Endothelial cell of umbilical vein (primary cell): ENCODE measurements at regions of chr12 and their contacts with region 1.

Region 1: GRCh38 chr12:15268927-15269552 is 47.8 kb upstream of the RERG start:
- DNase-seq: peak; percentile 61
- H3K4me3 ChIP-seq: no peak overlapping the region
- H3K27ac ChIP-seq: no peak overlapping the region
- H3K4me1 ChIP-seq: no peaks in the 10 kb centered on the region
- H3K27me3 ChIP-seq: no peaks in the 10 kb centered on the region
- CTCF ChIP-seq: peak; percentile 69 to 72
- POLR2A ChIP-seq: no peak

Region 2: GRCh38 chr12:14629832-14630710 is 639.0 kb before region 1 on chr12:
- CTCF ChIA-PET with region 1: no interaction called
- POLR2A ChIA-PET with region 1: no interaction called
- dilution Hi-C with region 1: no loop called
- intact Hi-C with region 1: loop called (anchors 1 kb)
- DNase-seq: peak; percentile 70
- H3K4me3 ChIP-seq: no peak overlapping the region
- H3K27ac ChIP-seq: no peak overlapping the region
- H3K4me1 ChIP-seq: no peaks in the 10 kb centered on the region
- H3K27me3 ChIP-seq: peaks cover 2 to 6% of the 10 kb centered on the region in 2 experiments
- CTCF ChIP-seq: peak; percentile 86 to 91
- POLR2A ChIP-seq: no peak

Region 3: DNA sequence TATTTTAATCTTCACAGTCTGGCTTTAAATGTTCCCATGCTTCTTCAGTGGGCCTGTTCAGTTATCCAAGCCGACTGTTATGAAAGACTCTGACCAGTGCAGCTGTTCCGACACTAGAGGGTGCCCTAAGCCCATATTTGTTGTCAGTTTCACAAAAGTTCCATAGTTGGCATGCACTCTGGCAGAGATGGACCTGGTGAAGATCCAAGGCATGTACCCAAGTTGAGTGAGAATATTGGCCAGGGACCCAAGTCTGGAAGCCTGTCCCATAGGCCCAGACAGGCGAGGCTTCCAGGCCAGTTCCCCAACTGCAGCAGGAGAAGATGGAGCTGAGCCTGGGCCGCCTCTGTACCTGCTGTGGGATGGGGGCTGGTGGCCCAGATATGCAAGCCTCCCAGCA is 545.3 kb before region 1 on chr12:
- CTCF ChIA-PET with region 1: interaction called, 17 read pairs
- POLR2A ChIA-PET with region 1: no interaction called
- dilution Hi-C with region 1: no loop called
- intact Hi-C with region 1: loop called (anchors 1 kb)
- DNase-seq: peak; percentile 56
- H3K4me3 ChIP-seq: no peak overlapping the region
- H3K27ac ChIP-seq: no peak overlapping the region
- H3K4me1 ChIP-seq: no peaks in the 10 kb centered on the region
- H3K27me3 ChIP-seq: peaks cover 0 to 2% of the 10 kb centered on the region in 2 experiments
- CTCF ChIP-seq: peak; percentile 57 to 75
- POLR2A ChIP-seq: no peak

Region 4: DNA sequence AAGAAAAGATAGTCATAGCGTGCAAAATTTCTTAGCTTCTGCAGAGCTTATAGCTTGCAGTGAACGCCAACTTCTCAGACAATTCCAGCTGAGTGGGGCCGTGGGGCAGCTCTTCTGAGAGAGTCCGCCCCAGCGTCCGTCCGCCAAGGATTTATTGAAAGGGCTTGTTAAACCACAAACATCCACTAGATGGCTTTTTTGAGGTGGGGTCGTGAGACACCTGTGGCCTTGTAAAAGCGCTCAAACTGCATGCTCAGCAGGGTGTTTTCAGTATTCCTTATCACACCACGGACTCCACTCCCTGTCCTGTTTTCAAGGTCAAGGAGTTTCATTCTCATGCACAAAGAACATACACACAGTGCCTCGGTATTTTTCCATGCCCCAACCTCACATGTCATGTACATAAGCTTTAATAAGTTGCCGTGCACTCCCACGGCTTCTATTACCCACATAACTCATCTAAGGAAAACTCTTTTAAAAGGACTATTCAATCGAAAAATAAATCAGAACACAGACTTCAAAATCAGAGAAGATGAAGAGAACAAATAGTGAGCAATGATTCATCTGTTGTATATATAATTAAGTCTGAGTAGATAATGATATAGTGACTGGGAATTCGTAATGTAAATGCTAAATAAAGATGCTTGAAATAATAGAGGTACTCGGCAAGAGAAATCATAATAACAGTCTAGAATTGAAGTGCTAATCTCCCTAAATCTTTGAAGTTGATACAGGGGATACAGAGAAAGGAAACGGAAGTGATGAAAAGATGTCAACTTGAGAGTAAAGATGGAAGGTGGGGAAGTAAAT is 512.5 kb before region 1 on chr12:
- CTCF ChIA-PET with region 1: no interaction called
- POLR2A ChIA-PET with region 1: no interaction called
- dilution Hi-C with region 1: no loop called
- intact Hi-C with region 1: loop called (anchors 10 kb)
- DNase-seq: no peak
- H3K4me3 ChIP-seq: no peak overlapping the region
- H3K27ac ChIP-seq: no peak overlapping the region
- H3K4me1 ChIP-seq: no peaks in the 10 kb centered on the region
- H3K27me3 ChIP-seq: peaks cover 0 to 2% of the 10 kb centered on the region in 2 experiments
- CTCF ChIP-seq: peak; percentile 39 to 40
- POLR2A ChIP-seq: no peak

Region 5: DNA sequence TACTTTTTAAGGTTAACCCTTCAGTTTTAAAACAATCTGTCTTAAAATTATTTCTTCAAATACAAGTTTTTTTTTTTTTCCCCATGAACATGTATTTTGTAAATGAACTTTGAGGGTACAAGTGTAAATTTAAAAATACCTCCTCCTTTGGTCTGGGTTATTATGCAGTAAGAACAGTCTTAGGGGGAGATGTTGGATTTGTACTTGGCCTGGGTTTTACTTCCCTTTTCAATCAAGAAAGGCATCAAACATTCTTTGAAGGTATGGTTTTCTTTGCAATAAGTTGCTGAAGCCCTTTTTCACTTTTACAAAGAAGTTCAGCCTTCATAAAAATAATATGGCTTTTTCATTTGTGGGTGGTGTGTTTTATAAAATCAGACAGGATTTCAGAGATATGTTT is 486.3 kb before region 1 on chr12:
- CTCF ChIA-PET with region 1: no interaction called
- POLR2A ChIA-PET with region 1: no interaction called
- dilution Hi-C with region 1: no loop called
- intact Hi-C with region 1: no loop called
- DNase-seq: no peak
- H3K4me3 ChIP-seq: no peak overlapping the region
- H3K27ac ChIP-seq: no peak overlapping the region
- H3K4me1 ChIP-seq: no peaks in the 10 kb centered on the region
- H3K27me3 ChIP-seq: no peaks in the 10 kb centered on the region
- CTCF ChIP-seq: no peak
- POLR2A ChIP-seq: no peak

Region 6: GRCh38 chr12:14920475-14921126 is 348.4 kb before region 1 on chr12:
- CTCF ChIA-PET with region 1: no interaction called
- POLR2A ChIA-PET with region 1: no interaction called
- dilution Hi-C with region 1: no loop called
- intact Hi-C with region 1: no loop called
- DNase-seq: no peak
- H3K4me3 ChIP-seq: no peak overlapping the region
- H3K27ac ChIP-seq: no peak overlapping the region
- H3K4me1 ChIP-seq: no peaks in the 10 kb centered on the region
- H3K27me3 ChIP-seq: no peaks in the 10 kb centered on the region
- CTCF ChIP-seq: no peak
- POLR2A ChIP-seq: no peak

Region 7: DNA sequence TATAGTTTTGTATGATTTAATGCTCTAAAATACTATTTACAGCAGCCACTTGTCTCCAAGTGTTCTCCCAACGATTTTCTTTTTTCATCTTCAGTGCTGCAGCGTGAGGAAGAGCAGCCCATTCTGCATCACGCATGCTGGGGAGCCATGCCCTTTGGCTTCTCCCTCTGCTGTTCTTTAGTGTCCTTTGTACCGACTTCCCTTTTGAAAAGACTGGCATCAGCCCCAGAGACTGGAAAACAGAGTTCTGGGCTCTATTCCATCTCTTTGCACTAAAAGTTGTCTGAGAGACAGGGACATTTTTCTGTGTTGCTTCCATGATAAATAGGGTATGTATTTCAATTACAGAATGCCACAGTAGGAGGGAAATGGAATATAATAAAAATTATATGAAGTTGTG is 153.0 kb before region 1 on chr12:
- CTCF ChIA-PET with region 1: no interaction called
- POLR2A ChIA-PET with region 1: no interaction called
- dilution Hi-C with region 1: no loop called
- intact Hi-C with region 1: no loop called
- DNase-seq: peak; percentile 7
- H3K4me3 ChIP-seq: no peak overlapping the region
- H3K27ac ChIP-seq: no peak overlapping the region
- H3K4me1 ChIP-seq: no peaks in the 10 kb centered on the region
- H3K27me3 ChIP-seq: peaks cover 0 to 3% of the 10 kb centered on the region in 2 experiments
- CTCF ChIP-seq: no peak
- POLR2A ChIP-seq: no peak

Region 8: DNA sequence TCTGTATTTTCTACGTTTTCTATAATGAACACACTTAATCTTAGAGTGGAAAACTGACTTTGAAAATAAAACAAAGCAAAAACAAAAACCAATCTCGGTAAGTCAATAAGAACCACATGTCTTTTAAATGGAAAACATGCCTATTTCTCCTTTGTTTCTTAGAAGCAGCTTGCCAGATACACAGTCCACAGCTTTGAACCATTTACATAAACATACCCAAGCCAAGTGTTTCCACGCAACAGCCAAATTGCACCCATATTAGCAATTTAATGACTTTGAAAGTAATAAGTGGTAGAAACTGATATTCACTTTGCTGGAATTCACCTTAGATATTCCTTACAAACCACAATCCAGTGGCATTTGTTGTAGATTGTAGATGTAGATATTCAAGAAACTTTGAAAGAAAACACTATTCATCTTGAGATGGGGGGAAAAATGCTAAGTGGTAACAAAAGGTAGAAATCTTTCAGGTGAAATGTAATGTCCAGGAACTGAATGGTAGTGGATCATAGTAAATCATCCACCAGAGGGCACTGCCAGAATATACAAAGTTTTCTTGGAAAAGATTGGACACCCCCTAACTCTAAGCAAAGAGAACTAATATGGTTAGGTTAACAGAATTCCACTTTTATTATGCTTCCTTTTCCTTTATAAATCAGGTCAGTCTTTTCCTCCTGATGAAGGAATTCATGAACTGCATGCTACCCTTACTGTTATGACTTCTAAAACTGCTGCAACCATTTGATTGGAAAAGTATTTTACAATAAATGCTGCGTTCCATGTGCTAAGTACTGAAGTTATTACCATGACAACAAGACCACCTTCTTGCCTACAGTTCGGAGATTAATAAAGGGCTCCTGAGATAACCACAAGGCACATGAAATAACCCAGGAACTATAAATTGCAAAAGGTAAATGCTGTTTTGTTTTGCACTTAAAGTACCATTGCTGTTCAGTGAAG is 117.6 kb before region 1 on chr12:
- CTCF ChIA-PET with region 1: interaction called, 3 read pairs
- POLR2A ChIA-PET with region 1: no interaction called
- dilution Hi-C with region 1: no loop called
- intact Hi-C with region 1: loop called (anchors 2 kb)
- DNase-seq: peak; percentile 50
- H3K4me3 ChIP-seq: no peak overlapping the region
- H3K27ac ChIP-seq: no peak overlapping the region
- H3K4me1 ChIP-seq: no peaks in the 10 kb centered on the region
- H3K27me3 ChIP-seq: peaks cover 0 to 2% of the 10 kb centered on the region in 2 experiments
- CTCF ChIP-seq: peak; percentile 9 to 40
- POLR2A ChIP-seq: no peak

Region 9: GRCh38 chr12:15227004-15227679 is 41.9 kb before region 1 on chr12:
- CTCF ChIA-PET with region 1: interaction called, 6 read pairs
- POLR2A ChIA-PET with region 1: no interaction called
- dilution Hi-C with region 1: no loop called
- intact Hi-C with region 1: loop called (anchors 1 kb)
- DNase-seq: peak; percentile 55
- H3K4me3 ChIP-seq: no peak overlapping the region
- H3K27ac ChIP-seq: no peak overlapping the region
- H3K4me1 ChIP-seq: no peaks in the 10 kb centered on the region
- H3K27me3 ChIP-seq: peaks cover 7 to 23% of the 10 kb centered on the region in 2 experiments
- CTCF ChIP-seq: peak; percentile 56 to 67
- POLR2A ChIP-seq: no peak